ENCODE measurements at regions of chr16 and their contacts with region 1.

Region 1: DNA sequence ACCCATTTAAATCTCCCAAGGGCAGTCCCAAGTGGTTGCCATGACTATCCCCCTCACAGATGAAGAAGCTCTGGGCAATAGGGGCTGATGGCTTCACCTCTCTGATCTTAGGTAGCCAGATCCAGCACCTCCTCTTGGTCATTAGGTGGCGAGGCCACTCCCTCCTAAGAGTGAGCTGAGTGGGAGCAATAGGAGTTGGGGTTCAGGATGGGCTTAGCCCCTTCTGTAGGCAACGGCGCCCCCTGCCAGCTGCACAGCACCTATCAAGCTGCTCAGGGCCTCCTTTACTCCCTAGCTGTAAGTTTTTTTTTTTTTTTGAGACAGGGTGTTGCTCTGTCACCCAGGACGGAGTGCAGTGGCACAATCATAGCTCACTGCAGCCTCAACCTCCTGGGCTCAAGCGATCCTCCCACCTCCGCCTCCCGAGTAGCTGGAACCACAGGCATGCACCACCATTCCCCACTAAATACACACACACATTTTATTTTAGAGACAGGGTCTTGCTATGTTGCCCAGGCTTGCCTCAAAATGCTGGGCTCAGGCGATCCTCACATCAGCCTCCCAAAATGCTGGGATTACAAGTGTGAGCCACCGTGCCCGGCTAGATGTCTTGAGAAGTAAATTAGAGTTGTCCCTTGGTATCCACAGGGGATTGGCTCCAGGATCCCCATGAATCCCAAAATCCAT is 3.5 kb upstream of the RRAD start:
- DNase-seq: peak; percentile 64
- H3K4me3 Mint-ChIP-seq: no peak overlapping the region
- H3K27ac Mint-ChIP-seq: no peak overlapping the region
- H3K4me1 Mint-ChIP-seq: peaks cover 44% of the 10 kb centered on the region
- H3K27me3 Mint-ChIP-seq: peaks cover 18% of the 10 kb centered on the region

Region 2: DNA sequence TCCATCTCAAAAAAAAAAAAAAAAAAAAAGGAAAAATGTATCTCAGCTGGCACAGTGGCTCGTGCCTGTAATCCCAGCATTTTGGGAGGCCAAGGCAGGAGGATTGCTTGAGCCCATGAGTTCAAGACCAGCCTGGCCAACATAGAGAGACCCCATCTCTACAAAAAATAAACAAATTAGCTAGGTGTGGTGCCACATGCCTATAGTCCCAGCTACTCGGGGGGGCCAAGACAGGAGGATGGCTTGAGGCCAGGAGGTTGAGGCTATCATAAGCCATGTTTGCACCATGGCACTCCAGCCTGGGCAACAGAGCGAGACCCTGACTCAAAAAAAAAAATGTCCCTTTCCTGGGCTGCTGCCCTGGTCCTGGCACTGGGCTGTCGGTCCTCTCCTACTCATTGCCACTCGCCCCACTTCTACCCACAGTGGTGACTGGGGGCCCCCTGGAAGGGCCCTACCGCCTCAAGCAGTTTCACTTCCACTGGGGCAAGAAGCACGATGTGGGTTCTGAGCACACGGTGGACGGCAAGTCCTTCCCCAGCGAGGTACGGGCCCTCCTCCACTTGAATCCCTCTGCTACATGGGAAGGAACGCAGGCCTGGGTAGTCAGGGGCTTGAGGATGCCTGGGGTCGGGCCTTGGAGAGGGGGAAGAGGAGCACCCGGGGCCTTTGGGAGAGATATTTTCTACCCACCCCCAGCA is 78.6 kb before region 1 on chr16:
- CTCF ChIA-PET with region 1: no interaction called
- POLR2A ChIA-PET with region 1: no interaction called
- DNase-seq: no peak
- H3K4me3 Mint-ChIP-seq: no peak overlapping the region
- H3K27ac Mint-ChIP-seq: no peak overlapping the region
- H3K4me1 Mint-ChIP-seq: peaks cover 16% of the 10 kb centered on the region
- H3K27me3 Mint-ChIP-seq: peaks cover 13% of the 10 kb centered on the region

Region 3: DNA sequence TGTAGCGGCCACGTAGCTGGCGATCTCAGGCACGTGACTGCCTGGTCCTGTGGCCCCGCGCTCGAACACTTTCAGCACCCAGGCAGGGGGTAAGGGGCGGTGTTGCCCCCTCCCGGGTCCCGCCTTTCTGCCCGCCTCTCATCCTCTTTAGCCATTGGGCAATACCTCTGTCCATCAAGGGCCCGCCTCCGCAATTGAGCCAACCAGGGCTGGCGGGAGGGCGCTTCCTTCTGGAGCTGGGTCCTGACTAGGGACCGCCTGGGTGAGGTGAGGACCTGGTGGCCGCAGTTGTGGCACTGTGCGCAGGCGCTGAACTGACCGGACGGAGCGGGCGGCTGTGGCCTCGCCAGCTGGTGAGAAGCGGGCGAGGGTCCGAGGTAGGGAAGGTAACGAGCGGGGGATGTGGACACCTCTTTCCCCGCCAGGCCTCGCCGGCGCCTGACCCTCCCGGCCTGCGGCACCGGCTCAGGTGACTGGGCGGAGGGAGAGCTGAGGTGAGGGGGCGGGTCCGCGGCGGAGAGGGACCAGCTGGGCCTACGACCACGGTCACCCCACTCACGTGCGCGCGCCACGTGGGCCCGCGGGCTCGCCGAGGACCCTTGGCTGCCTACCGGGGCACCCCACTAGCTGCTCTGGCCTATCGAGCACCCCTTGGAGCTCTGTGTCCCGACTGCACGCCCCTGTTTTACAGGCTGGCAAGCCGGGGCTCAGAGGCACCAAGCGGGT is 48.4 kb before region 1 on chr16 and contains the start of gene PDP2:
- CTCF ChIA-PET with region 1: interaction called, 13 read pairs
- POLR2A ChIA-PET with region 1: interaction called, 4 read pairs
- DNase-seq: peak; percentile 93
- H3K4me3 Mint-ChIP-seq: peak within 1 kb of the TSS; percentile 98
- H3K27ac Mint-ChIP-seq: peak within 1 kb of the TSS; percentile 89
- H3K4me1 Mint-ChIP-seq: peaks cover 54% of the 10 kb centered on the region
- H3K27me3 Mint-ChIP-seq: no peaks in the 10 kb centered on the region
- total RNA-seq, gene PDP2: 30.7 to 33.9 TPM

Region 4: GRCh38 chr16:66894948-66895688 is 33.7 kb before region 1 on chr16:
- CTCF ChIA-PET with region 1: interaction called, 57 read pairs
- POLR2A ChIA-PET with region 1: interaction called, 4 read pairs
- DNase-seq: peak; percentile 76
- H3K4me3 Mint-ChIP-seq: no peak overlapping the region
- H3K27ac Mint-ChIP-seq: no peak overlapping the region
- H3K4me1 Mint-ChIP-seq: peaks cover 24% of the 10 kb centered on the region
- H3K27me3 Mint-ChIP-seq: no peaks in the 10 kb centered on the region

Region 5: DNA sequence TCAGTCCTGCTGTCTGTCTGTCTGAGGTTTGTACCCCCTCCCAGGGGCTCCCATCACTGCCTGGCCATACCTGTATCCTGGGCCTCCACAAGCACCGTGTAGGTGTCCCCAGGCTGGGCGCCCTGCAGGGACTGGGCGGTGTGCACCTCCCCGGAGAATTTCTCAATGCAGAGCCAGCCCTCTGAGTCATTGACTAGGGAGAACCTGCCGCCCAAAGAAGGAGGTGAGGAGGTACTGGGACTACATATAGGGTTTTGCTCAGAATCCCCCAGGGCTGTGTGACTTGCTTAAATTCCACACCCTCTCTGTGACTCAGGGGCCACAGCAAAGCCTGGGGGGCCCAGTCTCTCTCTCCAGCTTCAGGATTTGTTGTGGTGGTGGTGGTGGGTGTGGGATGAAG is 17.7 kb before region 1 on chr16:
- CTCF ChIA-PET with region 1: interaction called, 11 read pairs
- POLR2A ChIA-PET with region 1: interaction called, 4 read pairs
- DNase-seq: no peak
- H3K4me3 Mint-ChIP-seq: no peak overlapping the region
- H3K27ac Mint-ChIP-seq: no peak overlapping the region
- H3K4me1 Mint-ChIP-seq: peaks cover 4% of the 10 kb centered on the region
- H3K27me3 Mint-ChIP-seq: peaks cover 10% of the 10 kb centered on the region

Measured in activated CD4-positive, alpha-beta memory T cell treated with anti-CD3 and anti-CD28 coated beads, Interleukin-2, amount 10 ng/mL, durations not matched to agents 7 days and 5 days (primary cell).